ENCODE measurements at regions of chr10 and their contacts with region 1.

Region 1: DNA sequence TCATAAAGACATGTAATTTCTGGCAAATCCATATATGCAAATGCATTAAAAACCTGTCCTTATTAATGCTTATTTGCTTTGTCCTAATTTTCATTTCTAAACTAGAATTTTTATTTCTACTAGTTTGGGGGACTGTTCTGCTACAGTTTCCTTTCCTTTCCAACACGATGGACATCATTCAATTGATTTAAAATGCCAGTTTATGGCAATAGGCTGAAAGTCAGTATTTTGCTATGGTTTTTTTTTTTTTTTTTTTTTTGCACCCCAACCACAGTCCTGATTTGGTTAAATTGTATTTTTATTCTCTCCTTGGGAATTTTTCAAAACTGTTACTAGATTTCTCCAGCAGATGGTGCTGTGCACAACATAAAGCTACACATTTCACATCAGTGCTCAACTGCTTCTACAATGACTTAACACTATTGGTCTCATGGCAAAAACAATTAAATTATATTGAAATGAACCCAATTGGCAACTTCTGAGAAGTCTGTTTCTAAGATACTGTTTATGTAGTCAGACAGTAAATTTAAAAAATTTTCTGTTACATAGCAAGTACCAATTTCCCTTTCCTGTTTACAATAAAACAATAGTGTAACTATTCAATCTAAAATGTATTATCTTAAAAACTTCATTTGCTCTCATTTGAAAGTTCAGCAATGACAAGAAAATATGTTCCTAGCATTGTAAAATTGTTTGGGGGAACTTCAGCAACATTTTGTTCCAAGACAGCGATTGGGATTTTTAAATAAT is 193.8 kb upstream of the CCDC6 start:
- DNase-seq: peak in 4 of 5 donors; percentile 23 to 38 (median 34)
- H3K4me3 ChIP-seq: no peak overlapping the region
- H3K4me3 Mint-ChIP-seq: no peak overlapping the region
- H3K27ac ChIP-seq: no peak overlapping the region
- H3K27ac Mint-ChIP-seq: peak overlapping the region in 1 of 7 donors; percentile 1
- H3K4me1 ChIP-seq: no peaks in the 10 kb centered on the region
- H3K4me1 Mint-ChIP-seq: peaks cover 0 to 4% (median under 1%) of the 10 kb centered on the region in 4 donors
- H3K27me3 ChIP-seq: no peaks in the 10 kb centered on the region
- H3K27me3 Mint-ChIP-seq: no peaks in the 10 kb centered on the region

Region 2: GRCh38 chr10:59865101-59865500 is 235.1 kb before region 1 on chr10:
- CTCF ChIA-PET with region 1: interaction called, 10 read pairs
- POLR2A ChIA-PET with region 1: no interaction called
- intact Hi-C with region 1: no loop called
- DNase-seq: peak in 1 of 5 donors; percentile 22
- H3K4me3 ChIP-seq: no peak overlapping the region
- H3K4me3 Mint-ChIP-seq: peak overlapping the region in 5 of 8 donors; percentile 1 to 47 (median 12)
- H3K27ac ChIP-seq: no peak overlapping the region
- H3K27ac Mint-ChIP-seq: peak overlapping the region in 5 of 7 donors; percentile 2 to 63 (median 9)
- H3K4me1 ChIP-seq: peaks cover 24% of the 10 kb centered on the region
- H3K4me1 Mint-ChIP-seq: peaks cover 46 to 78% (median 65%) of the 10 kb centered on the region in 4 donors
- H3K27me3 ChIP-seq: no peaks in the 10 kb centered on the region
- H3K27me3 Mint-ChIP-seq: no peaks in the 10 kb centered on the region

Region 3: GRCh38 chr10:60114765-60115586 is 14.8 kb after region 1 on chr10:
- CTCF ChIA-PET with region 1: interaction called, 10 read pairs
- POLR2A ChIA-PET with region 1: no interaction called
- intact Hi-C with region 1: no loop called
- DNase-seq: peak in 4 of 5 donors; percentile 16 to 28 (median 24)
- H3K4me3 ChIP-seq: no peak overlapping the region
- H3K4me3 Mint-ChIP-seq: no peak overlapping the region
- H3K27ac ChIP-seq: no peak overlapping the region
- H3K27ac Mint-ChIP-seq: no peak overlapping the region
- H3K4me1 ChIP-seq: no peaks in the 10 kb centered on the region
- H3K4me1 Mint-ChIP-seq: no peaks in the 10 kb centered on the region
- H3K27me3 ChIP-seq: no peaks in the 10 kb centered on the region
- H3K27me3 Mint-ChIP-seq: no peaks in the 10 kb centered on the region

Region 4: DNA sequence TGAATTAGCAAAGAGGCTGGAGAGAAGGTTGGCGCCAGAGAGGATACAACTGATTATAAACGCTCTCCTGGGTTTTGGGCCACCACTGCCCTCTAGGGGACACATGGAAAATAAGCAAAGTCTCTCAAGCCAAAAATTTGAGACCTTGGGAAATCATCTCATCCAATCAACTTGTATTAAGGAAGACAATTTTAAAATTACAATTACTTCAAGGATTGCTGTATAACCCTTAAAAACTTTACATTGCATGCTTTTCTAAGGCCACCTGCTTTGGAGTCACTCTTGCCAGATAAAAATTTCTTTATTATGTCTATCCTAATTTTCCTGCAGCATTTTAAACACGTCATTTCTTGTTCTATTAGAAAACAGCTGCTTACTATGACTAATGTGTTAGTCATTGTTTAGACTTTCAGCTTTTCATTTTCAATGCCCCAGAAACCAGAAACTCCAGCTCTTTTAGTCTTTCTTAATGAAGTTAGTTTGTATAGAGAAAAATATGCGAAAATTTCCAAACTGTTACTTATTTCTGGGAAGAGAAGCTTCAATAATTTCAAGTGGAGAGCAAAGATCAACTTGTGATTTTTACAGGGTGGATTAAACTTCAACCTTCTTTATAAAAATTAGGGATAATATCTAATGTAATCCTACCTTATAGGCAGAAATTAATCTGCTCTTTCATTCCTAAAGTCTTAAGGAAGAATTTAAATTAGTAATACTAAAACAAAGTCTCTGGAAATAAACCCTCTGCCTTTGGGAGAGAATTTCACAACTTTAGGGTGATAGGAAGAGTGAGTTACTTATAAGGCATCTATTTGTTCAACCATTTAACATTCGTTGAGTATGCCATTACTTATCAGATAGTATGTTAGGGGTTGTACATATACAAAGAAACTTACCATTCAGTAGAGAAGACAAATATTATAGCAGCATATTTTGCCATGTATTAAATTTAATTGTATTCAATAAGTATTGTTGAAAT is 864.4 kb after region 1 on chr10:
- CTCF ChIA-PET with region 1: interaction called, 3 read pairs
- POLR2A ChIA-PET with region 1: no interaction called
- intact Hi-C with region 1: loop called (anchors 5 kb)
- DNase-seq: peak; percentile 32 to 41 (median 33)
- H3K4me3 ChIP-seq: no peak overlapping the region
- H3K4me3 Mint-ChIP-seq: no peak overlapping the region
- H3K27ac ChIP-seq: no peak overlapping the region
- H3K27ac Mint-ChIP-seq: no peak overlapping the region
- H3K4me1 ChIP-seq: no peaks in the 10 kb centered on the region
- H3K4me1 Mint-ChIP-seq: peaks cover 0 to 2% (median under 1%) of the 10 kb centered on the region in 4 donors
- H3K27me3 ChIP-seq: peaks cover 10% of the 10 kb centered on the region
- H3K27me3 Mint-ChIP-seq: peaks cover 15 to 25% of the 10 kb centered on the region in 2 donors